ENCODE measurements at regions of chr5 and their contacts with region 1.

Region 1: GRCh38 chr5:141701360-141702119 is 19.5 kb upstream of the ARAP3 start:
- DNase-seq: no peak
- H3K4me3 ChIP-seq: peak overlapping the region in 1 of 2 experiments; percentile 46; a peak in 1 of 4 replicates
- H3K27ac ChIP-seq: no peak overlapping the region
- H3K4me1 ChIP-seq: peaks cover 0 to 14% of the 10 kb centered on the region in 2 experiments; a peak in 1 of 4 replicates
- H3K27me3 ChIP-seq: peaks cover 70% of the 10 kb centered on the region
- CTCF ChIP-seq: no peak
- EP300 ChIP-seq: no peak
- RAD21 ChIP-seq: no peak

Region 2: GRCh38 chr5:141716009-141716408 is 14.5 kb after region 1 on chr5:
- CTCF ChIA-PET with region 1: interaction called, 31 read pairs
- POLR2A ChIA-PET with region 1: no interaction called
- DNase-seq: no peak
- H3K4me3 ChIP-seq: no peak overlapping the region
- H3K27ac ChIP-seq: no peak overlapping the region
- H3K4me1 ChIP-seq: peaks cover 0 to 15% of the 10 kb centered on the region in 2 experiments; a peak in 1 of 4 replicates
- H3K27me3 ChIP-seq: no peaks in the 10 kb centered on the region; the same call in none of the 2 replicates
- CTCF ChIP-seq: no peak
- EP300 ChIP-seq: no peak
- RAD21 ChIP-seq: no peak

Region 3: DNA sequence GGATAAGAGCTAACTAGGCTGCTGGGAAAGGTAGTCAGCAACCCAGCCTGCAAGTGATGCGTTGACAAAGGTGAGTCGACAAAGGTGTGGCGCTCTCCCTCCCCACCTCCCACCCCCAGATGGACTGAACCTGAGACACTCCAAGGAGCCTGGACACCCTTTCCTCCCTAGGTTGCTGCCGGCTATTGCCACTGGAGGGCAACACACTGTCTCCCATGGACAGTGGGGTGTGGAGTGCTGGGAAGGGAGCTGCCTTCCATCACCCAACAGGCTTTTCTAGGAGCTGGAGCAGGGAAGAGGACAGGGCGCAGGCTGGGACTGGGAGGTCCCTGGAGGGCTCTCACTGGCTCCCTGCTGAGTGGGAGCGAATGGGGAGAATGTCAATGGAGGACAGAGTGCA is 55.9 kb after region 1 on chr5:
- CTCF ChIA-PET with region 1: interaction called, 23 read pairs
- POLR2A ChIA-PET with region 1: interaction called, 4 read pairs
- DNase-seq: peak; percentile 80
- H3K4me3 ChIP-seq: no peak overlapping the region; a peak in 1 of 4 replicates
- H3K27ac ChIP-seq: no peak overlapping the region
- H3K4me1 ChIP-seq: peaks cover 0 to 27% of the 10 kb centered on the region in 2 experiments; a peak in 1 of 4 replicates
- H3K27me3 ChIP-seq: peaks cover under 1% of the 10 kb centered on the region
- CTCF ChIP-seq: peak; percentile 50
- EP300 ChIP-seq: no peak
- RAD21 ChIP-seq: peak; percentile 70

Region 4: GRCh38 chr5:141805874-141806595 is 104.5 kb after region 1 on chr5:
- CTCF ChIA-PET with region 1: interaction called, 447 read pairs
- POLR2A ChIA-PET with region 1: no interaction called
- DNase-seq: no peak
- H3K4me3 ChIP-seq: no peak overlapping the region
- H3K27ac ChIP-seq: no peak overlapping the region
- H3K4me1 ChIP-seq: peaks cover 0 to 9% of the 10 kb centered on the region in 2 experiments; a peak in 1 of 4 replicates
- H3K27me3 ChIP-seq: peaks cover 52% of the 10 kb centered on the region
- CTCF ChIP-seq: no peak
- EP300 ChIP-seq: no peak
- RAD21 ChIP-seq: no peak

Region 5: GRCh38 chr5:141846031-141846430 is 144.5 kb after region 1 on chr5:
- CTCF ChIA-PET with region 1: interaction called, 20 read pairs
- POLR2A ChIA-PET with region 1: no interaction called
- DNase-seq: peak; percentile 82
- H3K4me3 ChIP-seq: no peak overlapping the region; a peak in 1 of 4 replicates
- H3K27ac ChIP-seq: peak overlapping the region in 1 of 2 experiments; percentile 80; a peak in 2 of 4 replicates
- H3K4me1 ChIP-seq: peaks cover 8 to 64% of the 10 kb centered on the region in 2 experiments; a peak in 3 of 4 replicates
- H3K27me3 ChIP-seq: peaks cover 2% of the 10 kb centered on the region; the same call in 1 of the 2 replicates
- CTCF ChIP-seq: no peak
- EP300 ChIP-seq: no peak; a peak in 1 of 4 replicates
- RAD21 ChIP-seq: no peak

Region 6: DNA sequence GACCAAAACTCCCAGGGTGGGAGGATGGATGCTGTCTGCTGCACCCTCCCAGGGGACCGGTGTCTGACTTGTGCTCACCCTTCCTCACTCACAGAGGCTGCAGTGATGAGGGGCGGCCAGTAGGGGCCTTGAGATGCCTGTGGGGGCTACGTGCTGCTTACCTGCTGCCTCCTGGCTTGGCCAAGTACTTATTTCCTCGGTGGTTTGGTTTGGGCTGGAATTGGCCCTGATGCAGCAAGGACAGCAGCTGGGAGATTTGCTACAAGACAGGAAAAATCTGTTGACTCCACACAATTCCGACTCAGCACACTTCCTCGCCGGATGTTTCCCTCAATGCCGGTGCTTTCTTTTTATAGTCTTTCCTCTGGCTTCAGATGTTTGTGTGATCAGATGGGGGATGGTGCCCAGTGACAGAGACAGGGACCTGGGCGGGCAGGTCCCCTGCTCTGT is 249.8 kb after region 1 on chr5:
- CTCF ChIA-PET with region 1: interaction called, 12 read pairs
- POLR2A ChIA-PET with region 1: no interaction called
- DNase-seq: peak; percentile 63
- H3K4me3 ChIP-seq: no peak overlapping the region
- H3K27ac ChIP-seq: no peak overlapping the region
- H3K4me1 ChIP-seq: no peaks in the 10 kb centered on the region
- H3K27me3 ChIP-seq: no peaks in the 10 kb centered on the region
- CTCF ChIP-seq: peak; percentile 43
- EP300 ChIP-seq: no peak
- RAD21 ChIP-seq: no peak